Activated naive CD8-positive, alpha-beta T cell treated with anti-CD3 and anti-CD28 coated beads, Interleukin-2, amount 10 ng/mL, durations not matched to agents 7 days and 5 days (primary cell): ENCODE measurements at regions of chrX and their contacts with region 1.

Region 1: DNA sequence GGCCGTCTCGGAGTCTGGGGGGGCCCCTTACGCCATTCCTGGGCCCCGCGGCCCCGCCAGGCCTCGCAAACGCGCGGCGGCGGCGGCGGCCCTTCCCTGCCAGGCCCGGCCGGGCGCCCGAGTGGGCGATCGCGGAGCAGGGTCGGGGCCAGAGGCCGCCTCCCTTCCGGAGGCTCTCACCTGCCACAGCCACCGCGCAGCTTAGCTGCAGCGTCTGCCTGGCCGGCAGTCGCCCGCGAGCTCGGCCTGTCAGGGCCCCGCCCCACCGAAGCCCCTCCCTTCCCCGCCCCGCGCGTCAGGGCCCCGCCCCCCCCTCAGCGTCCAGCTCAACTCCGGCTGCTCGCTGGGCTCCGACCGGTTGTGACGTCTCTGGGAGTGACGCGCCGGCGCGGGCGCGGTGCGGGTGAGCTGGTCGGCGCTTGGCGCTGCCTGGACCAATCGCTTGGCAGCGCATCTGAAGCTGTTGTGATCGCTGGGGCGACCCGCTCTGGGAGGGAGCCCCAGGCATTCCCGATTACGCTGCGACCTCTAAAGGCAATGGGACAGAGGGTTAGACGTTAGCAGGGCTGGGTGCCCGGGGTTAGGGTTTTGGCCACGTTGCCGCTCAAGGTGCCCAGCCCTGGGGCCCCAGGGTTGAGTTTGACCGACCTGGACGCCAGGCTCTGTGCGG is at the start of gene SLC10A3:
- DNase-seq: peak; percentile 87
- ATAC-seq: peak; percentile 87
- H3K4me3 Mint-ChIP-seq: peak within 1 kb of the TSS; percentile 90
- H3K27ac Mint-ChIP-seq: peak within 1 kb of the TSS; percentile 92
- H3K4me1 Mint-ChIP-seq: peaks cover 6% of the 10 kb centered on the region
- H3K27me3 Mint-ChIP-seq: no peaks in the 10 kb centered on the region
- total RNA-seq, gene SLC10A3: 25.3 to 27.3 TPM

Region 2: DNA sequence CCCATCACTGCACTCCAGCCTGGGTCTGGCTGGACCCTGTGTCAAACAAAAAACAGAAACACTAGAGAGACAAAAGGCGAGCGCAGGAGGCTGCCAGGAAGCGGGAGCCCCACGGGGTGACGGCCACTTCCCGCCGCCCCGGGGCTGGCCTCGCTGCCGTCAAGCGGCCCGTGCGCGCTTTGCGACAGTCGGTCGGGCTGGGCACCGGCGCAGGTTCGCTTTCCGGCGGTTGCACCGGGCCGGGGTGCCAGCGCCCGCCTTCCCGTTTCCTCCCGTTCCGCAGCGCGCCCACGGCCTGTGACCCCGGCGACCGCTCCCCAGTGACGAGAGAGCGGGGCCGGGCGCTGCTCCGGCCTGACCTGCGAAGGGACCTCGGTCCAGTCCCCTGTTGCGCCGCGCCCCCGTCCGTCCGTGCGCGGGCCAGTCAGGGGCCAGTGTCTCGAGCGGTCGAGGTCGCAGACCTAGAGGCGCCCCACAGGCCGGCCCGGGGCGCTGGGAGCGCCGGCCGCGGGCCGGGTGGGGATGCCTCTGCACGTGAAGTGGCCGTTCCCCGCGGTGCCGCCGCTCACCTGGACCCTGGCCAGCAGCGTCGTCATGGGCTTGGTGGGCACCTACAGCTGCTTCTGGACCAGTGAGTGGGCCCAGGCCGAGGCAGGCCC is 79.1 kb before region 1 on chrX and contains the start of gene TAFAZZIN:
- POLR2A ChIA-PET with region 1: interaction called, 18 read pairs
- DNase-seq: peak; percentile 80
- ATAC-seq: peak; percentile 59
- H3K4me3 Mint-ChIP-seq: peak within 1 kb of the TSS; percentile 93
- H3K27ac Mint-ChIP-seq: peak within 1 kb of the TSS; percentile 95
- H3K4me1 Mint-ChIP-seq: peaks cover 9% of the 10 kb centered on the region
- H3K27me3 Mint-ChIP-seq: no peaks in the 10 kb centered on the region
- total RNA-seq, gene TAFAZZIN: 94.7 to 95.3 TPM

Region 3: GRCh38 chrX:154458114-154458953 is 32.2 kb before region 1 on chrX and contains the start of gene PLXNA3:
- POLR2A ChIA-PET with region 1: interaction called, 10 read pairs
- DNase-seq: peak; percentile 83
- ATAC-seq: peak; percentile 71
- H3K4me3 Mint-ChIP-seq: peak within 1 kb of the TSS; percentile 98
- H3K27ac Mint-ChIP-seq: peak within 1 kb of the TSS; percentile 98
- H3K4me1 Mint-ChIP-seq: peaks cover 8% of the 10 kb centered on the region
- H3K27me3 Mint-ChIP-seq: no peaks in the 10 kb centered on the region
- total RNA-seq, gene PLXNA3: 62.5 to 64.1 TPM

Region 4: GRCh38 chrX:154515878-154516655 is 25.5 kb after region 1 on chrX and contains the start of gene FAM3A:
- POLR2A ChIA-PET with region 1: interaction called, 32 read pairs
- DNase-seq: peak; percentile 93
- ATAC-seq: peak; percentile 86
- H3K4me3 Mint-ChIP-seq: peak within 1 kb of the TSS; percentile 86
- H3K27ac Mint-ChIP-seq: peak within 1 kb of the TSS; percentile 92
- H3K4me1 Mint-ChIP-seq: peaks cover 22% of the 10 kb centered on the region
- H3K27me3 Mint-ChIP-seq: no peaks in the 10 kb centered on the region
- total RNA-seq, gene FAM3A: 42.3 to 45.4 TPM

Region 5: DNA sequence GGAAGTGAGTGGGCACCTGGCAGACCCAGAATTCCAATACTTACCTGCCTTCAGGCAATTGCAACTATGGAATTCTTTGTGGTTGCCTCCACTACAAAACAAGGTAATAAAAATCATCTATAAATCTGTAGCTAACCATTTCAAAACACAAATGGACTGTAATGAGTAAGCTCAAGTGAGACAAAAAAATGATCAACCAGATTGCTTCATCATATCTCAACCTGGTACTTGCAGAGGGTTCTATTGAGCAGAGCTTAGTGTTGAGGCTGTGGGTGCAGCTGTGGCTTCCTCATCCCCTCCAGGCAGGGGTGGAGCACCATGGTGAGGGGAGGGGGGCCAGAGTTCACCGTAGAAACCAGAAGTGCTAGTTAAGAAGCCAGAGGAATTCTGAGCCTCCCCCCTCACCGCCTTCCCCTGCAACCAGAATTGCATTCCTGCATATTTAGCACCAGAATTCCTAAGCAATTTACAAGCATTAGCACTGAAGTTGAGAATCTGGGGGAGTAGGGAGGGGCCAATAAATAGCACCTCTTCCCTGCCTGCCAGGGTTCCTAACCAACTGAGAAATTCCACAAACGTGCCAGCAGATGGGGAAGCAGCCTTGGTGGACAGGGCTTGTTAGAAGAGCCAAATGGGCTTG is 105.9 kb after region 1 on chrX:
- POLR2A ChIA-PET with region 1: no interaction called
- DNase-seq: no peak
- ATAC-seq: no peak
- H3K4me3 Mint-ChIP-seq: no peak overlapping the region
- H3K27ac Mint-ChIP-seq: no peak overlapping the region
- H3K4me1 Mint-ChIP-seq: peaks cover 10% of the 10 kb centered on the region
- H3K27me3 Mint-ChIP-seq: peaks cover 10% of the 10 kb centered on the region